Activated CD4-positive, alpha-beta T cell treated with anti-CD3 and anti-CD28 coated beads, Interleukin-2, amount 10 ng/mL, durations not matched to agents 7 days and 5 days (primary cell): ENCODE measurements at regions of chr1 and their contacts with region 1.

Region 1: DNA sequence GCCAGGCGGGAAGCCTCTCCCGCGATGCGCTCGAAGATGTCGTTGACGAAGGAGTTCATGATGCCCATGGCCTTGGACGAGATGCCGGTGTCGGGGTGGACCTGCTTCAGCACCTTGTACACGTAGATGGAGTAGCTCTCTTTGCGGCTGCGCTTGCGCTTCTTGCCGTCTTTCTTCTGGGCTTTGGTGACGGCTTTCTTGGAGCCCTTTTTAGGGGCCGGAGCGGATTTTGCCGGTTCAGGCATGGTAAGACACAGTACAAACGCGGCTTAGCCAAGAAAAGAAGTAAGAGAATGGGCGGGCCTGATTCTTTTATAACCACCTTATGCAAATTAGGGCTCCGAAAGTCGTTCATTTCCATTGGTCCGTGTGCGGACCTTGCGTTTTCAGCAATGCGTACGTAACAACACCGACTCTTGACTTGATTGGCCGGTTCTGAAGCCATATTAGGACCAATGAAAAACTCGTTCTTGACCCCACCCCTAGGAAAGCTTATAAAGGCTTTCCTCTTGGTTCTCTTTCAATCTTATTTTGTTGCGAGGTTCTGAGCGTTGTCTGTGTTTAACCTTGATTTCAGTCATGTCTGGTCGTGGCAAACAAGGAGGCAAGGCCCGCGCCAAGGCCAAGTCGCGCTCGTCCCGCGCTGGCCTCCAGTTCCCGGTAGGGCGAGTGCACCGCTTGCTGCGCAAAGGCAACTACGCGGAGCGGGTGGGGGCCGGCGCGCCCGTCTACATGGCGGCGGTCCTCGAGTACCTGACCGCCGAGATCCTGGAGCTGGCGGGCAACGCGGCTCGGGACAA is 12.8 kb upstream of the BOLA1 start:
- DNase-seq: peak; percentile 94
- H3K4me3 Mint-ChIP-seq: no peak overlapping the region
- H3K27ac Mint-ChIP-seq: no peak overlapping the region
- H3K4me1 Mint-ChIP-seq: peaks cover 17% of the 10 kb centered on the region
- H3K27me3 Mint-ChIP-seq: no peaks in the 10 kb centered on the region

Region 2: DNA sequence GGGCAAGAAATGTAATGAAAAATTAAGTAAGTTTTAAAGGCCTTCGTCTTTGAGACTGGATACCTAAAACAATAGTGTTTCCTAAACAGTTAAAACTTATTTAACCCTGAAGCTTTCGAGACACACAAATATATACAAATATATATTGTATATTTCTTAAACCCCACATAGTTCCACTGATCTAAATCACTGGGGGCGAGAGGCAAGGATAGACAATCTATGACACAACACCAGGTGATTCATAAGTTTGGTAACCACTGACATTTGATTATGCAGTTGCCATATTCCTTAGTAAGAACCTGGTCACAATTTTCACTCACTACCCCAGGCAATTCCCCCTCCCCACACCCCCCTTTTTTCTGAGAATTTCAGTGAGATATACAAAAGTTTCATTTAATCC is 42.5 kb before region 1 on chr1:
- CTCF ChIA-PET with region 1: interaction called, 6 read pairs
- POLR2A ChIA-PET with region 1: interaction called, 27 read pairs
- DNase-seq: peak; percentile 30
- H3K4me3 Mint-ChIP-seq: peak overlapping the region; percentile 81
- H3K27ac Mint-ChIP-seq: peak overlapping the region; percentile 92
- H3K4me1 Mint-ChIP-seq: peaks cover 46% of the 10 kb centered on the region
- H3K27me3 Mint-ChIP-seq: no peaks in the 10 kb centered on the region

Region 3: DNA sequence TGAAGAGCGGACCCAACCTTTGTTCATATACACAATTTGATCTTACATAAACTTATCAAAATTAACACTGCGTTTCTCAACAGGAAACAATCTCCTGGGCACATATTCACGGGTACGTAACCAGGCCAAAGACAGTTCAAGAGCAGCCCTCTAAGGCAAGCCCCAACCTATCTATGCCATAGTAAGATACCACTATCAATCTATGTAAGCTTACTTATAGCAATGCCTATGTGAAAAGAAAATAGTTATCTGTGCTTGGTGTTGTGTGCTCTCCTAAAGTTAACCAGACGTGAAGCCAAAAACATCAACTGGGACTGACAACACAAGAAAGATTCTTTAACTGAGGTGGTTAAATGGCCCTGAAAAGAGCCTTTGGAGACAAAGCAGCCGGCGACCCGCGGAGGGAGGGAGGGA is 36.6 kb before region 1 on chr1:
- CTCF ChIA-PET with region 1: interaction called, 6 read pairs
- POLR2A ChIA-PET with region 1: interaction called, 27 read pairs
- DNase-seq: peak; percentile 31
- H3K4me3 Mint-ChIP-seq: peak overlapping the region; percentile 89
- H3K27ac Mint-ChIP-seq: peak overlapping the region; percentile 95
- H3K4me1 Mint-ChIP-seq: peaks cover 47% of the 10 kb centered on the region
- H3K27me3 Mint-ChIP-seq: no peaks in the 10 kb centered on the region

Region 4: DNA sequence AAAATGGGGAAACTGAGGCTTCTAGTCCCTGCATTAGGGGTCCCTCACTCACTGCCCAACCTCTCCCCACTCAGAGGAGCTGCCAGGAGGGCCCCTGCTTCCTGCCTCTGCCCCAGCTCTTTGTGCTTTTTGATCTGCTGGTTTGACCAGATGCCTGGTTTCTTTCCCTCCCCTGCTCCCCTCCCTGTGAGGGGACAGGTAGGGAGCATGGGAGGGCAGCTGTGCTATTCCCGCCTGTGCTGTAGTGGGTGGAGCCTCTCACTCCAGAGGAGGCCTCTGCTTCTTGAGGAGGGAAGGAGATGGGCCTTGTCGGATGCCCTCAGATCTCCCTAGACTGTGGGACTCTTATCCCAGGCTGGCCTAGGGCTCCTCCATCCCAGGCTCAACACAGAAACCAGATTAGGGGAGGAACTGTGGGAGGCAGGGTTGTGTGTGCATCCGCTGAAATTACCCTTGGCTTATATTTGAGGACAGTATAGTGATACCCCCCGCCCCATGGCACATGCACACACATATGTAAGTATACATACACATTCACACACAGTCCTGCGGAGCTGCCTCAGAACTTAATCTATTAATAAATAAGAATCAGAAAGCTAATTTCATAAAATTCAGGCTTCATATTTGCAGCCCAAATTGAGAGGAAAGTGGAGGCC is 17.4 kb after region 1 on chr1:
- CTCF ChIA-PET with region 1: interaction called, 12 read pairs
- POLR2A ChIA-PET with region 1: interaction called, 8 read pairs
- DNase-seq: no peak
- H3K4me3 Mint-ChIP-seq: no peak overlapping the region
- H3K27ac Mint-ChIP-seq: no peak overlapping the region
- H3K4me1 Mint-ChIP-seq: peaks cover 24% of the 10 kb centered on the region
- H3K27me3 Mint-ChIP-seq: no peaks in the 10 kb centered on the region

Region 5: GRCh38 chr1:149927503-149928387 is 41.1 kb after region 1 on chr1 and contains the start of gene SF3B4:
- CTCF ChIA-PET with region 1: interaction called, 4 read pairs
- POLR2A ChIA-PET with region 1: interaction called, 31 read pairs
- DNase-seq: peak; percentile 96
- H3K4me3 Mint-ChIP-seq: peak within 1 kb of the TSS; percentile 93
- H3K27ac Mint-ChIP-seq: peak within 1 kb of the TSS; percentile 99
- H3K4me1 Mint-ChIP-seq: peaks cover 64% of the 10 kb centered on the region
- H3K27me3 Mint-ChIP-seq: no peaks in the 10 kb centered on the region
- total RNA-seq, gene SF3B4: 90.2 to 101 TPM